WTC11 (cell line): ENCODE measurements at regions of chr17 and their contacts with region 1.

Region 1: DNA sequence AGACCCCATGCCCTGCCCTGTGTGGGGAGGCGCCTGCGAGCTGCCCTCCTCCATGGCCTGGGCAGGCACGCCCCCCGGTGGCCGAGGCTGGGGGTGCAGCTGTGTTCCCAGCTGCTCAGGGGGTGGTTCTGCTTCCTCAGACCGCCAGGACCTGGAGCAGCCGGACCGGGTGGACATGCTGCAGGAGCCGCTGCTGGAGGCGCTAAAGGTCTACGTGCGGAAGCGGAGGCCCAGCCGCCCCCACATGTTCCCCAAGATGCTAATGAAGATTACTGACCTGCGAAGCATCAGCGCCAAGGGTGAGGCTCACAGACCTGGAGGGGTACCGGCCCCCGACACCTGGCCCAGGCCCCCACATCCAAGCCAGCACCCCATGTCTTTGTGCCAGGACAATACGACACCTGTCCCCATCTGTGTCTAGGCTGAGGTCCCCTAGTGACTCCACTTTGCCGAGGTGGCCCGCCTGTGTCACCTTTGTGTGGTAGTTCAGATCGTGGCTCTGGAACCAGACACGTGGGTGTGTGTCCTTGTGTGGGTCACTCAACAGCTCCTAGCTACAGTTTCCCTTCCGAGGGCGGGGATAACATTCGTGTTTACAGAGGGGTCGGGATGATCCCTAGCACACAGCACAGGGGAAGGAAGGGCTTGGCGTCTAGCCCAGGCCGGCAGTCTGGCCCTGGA is 9.3 kb downstream of the GJD3 start:
- DNase-seq: peak; percentile 96
- ATAC-seq: peak; percentile 87
- H3K4me3 Mint-ChIP-seq: no peak overlapping the region
- H3K27ac Mint-ChIP-seq: no peak overlapping the region; the same call in 1 of the 2 replicates
- H3K4me1 Mint-ChIP-seq: peaks cover 48% of the 10 kb centered on the region
- H3K27me3 Mint-ChIP-seq: peaks cover 3% of the 10 kb centered on the region
- CTCF ChIP-seq: peak; percentile 98

Region 2: DNA sequence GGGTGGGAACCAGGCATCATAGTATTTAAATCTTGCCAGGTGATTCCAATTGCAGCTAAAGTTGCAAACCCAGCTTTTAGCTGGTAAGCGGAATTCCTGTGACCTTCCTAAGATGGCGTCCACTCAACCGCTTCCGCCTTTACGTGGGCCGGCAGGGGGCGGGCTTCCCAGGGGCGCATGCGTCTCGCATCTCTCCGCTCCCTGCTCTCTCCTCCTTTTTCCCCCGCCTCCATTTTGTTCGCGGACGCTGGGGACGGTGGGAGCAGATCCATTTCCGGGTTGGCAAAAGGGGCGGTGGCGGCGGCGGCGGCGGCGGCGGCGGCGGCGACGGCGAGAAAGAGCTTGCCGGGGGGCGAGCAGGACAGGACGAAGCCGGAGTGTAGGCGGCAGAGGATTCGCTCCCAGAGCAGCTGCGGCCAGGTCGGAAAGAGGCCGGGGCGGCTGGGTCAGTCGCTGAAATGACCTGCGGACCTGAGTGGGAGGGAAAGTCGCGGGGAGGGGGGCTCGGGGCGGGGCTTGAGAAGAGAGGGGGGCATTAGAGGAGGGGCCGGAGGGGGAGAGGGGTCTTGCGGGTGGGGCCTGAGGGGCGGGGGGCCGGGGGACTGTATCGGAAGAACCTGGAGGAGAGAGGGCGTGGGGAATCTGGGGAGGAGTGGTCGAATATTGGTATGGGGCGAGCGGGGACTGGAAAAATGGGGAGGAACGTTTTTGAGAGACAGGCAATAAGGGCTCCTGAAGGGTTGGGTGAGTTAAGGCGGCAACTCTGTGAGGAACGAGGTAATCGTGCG is 136.0 kb before region 1 on chr17 and contains the start of gene WIPF2:
- CTCF ChIA-PET with region 1: interaction called, 15 read pairs
- POLR2A ChIA-PET with region 1: no interaction called
- DNase-seq: peak; percentile 99
- ATAC-seq: peak; percentile 90
- H3K4me3 Mint-ChIP-seq: peak within 1 kb of the TSS; percentile 90
- H3K27ac Mint-ChIP-seq: peak within 1 kb of the TSS; percentile 100
- H3K4me1 Mint-ChIP-seq: peaks cover 18% of the 10 kb centered on the region
- H3K27me3 Mint-ChIP-seq: no peaks in the 10 kb centered on the region; the same call in 1 of the 2 replicates
- CTCF ChIP-seq: peak; percentile 81
- total RNA-seq, gene WIPF2: 23.0 to 24.6 TPM (median 23.8 TPM) in 3 replicates

Region 3: DNA sequence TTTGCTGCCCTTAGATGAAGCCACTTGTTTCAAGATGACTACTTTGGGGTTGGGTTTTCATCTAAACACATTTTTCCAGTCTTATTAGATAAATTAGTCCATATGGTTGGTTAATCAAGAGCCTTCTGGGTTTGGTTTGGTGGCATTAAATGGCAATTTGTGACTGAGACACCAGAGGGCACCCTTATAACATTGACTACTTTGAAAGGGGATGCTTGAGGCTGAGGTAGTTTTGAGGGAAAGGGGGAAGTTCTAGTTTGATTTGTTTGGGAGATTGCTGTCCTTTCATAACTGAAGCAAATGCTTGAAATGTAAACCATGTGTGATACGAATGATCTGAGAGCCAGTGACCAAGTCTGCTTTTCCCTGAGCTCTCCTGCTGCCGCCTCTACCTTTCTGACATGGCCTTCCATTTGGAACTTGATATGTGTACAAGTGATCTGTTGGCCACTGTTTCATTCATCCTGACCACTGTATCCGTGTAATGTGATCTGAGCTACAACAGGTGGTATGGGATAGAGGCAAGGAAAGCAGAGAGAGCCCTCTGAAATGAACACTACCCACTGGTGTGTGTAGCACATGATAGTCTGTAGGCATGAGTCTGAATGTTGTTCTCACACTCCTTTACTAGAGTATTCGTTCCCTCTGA is 52.1 kb before region 1 on chr17:
- CTCF ChIA-PET with region 1: interaction called, 259 read pairs
- POLR2A ChIA-PET with region 1: interaction called, 14 read pairs
- DNase-seq: peak; percentile 48
- ATAC-seq: no peak
- H3K4me3 Mint-ChIP-seq: no peak overlapping the region
- H3K27ac Mint-ChIP-seq: no peak overlapping the region
- H3K4me1 Mint-ChIP-seq: peaks cover 10% of the 10 kb centered on the region
- H3K27me3 Mint-ChIP-seq: no peaks in the 10 kb centered on the region
- CTCF ChIP-seq: peak; percentile 23

Region 4: DNA sequence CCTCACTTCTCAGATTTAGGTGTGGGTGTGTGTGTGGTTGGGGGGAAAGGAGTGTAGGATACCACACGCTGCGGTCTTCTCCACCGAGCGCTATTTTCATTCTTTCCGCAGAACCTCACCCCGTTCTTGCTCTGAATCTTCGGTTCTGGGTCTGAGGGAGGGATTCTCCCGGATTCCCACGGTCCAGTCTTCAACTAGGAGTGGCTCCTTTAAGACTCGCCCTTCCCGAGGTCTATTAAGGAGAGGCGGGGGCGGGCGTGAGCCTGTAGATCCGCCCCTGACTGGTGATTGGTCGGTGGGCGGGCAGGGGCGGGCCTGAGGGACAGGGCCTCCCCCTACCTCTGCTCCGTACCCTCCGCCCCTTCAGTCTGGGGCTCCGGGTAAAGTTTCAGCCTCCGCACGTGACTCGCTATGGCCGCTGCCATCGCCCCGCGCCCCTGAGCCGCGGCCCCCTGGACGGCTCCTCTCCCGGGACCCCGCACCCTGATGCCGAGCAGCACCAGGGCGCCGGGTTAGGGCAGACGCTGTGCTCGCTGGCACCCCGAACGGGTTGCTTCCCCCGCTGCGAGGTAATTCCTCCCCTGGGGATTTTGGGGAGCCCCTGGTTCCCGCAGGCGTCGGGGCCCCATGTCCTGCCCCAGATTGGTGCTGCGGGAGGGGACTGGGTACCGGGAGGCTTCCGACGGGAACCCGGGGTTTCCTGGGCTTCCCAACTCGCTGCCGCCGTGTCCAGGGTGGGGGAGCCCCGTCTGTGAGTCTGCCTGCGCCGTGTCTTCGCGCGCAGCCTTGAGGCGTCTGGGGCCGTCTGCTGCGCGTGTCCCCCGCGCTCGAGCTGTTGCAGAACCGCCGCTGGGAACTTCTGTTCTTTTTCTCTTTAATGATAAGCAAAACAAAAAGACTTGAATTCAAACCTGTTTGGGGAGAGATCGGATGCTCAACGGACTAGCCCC is 37.1 kb before region 1 on chr17:
- CTCF ChIA-PET with region 1: interaction called, 106 read pairs
- POLR2A ChIA-PET with region 1: interaction called, 3 read pairs
- DNase-seq: peak; percentile 96
- ATAC-seq: peak; percentile 93
- H3K4me3 Mint-ChIP-seq: peak overlapping the region; percentile 90
- H3K27ac Mint-ChIP-seq: peak overlapping the region; percentile 97
- H3K4me1 Mint-ChIP-seq: peaks cover 74% of the 10 kb centered on the region
- H3K27me3 Mint-ChIP-seq: peaks cover 22% of the 10 kb centered on the region
- CTCF ChIP-seq: no peak

Region 5: DNA sequence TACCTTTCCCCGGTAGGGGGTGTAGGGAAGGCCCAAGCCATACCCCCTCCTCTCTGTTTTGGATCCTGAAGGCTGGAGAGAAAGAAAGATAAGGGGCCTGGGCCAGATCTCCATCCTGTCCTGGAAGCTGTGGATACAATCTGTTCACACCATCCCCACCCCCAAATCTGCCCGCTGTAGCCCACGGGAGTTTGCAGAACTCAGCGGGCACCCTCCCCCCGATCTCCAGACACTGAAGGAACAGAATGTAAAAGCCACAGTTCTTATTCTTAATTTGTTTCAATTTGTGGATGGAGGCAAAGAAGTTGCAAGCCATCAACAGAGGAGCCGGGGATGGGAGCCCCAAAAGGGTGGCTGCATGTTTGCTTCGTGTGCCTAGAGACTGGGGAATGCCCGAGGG is 17.9 kb before region 1 on chr17:
- CTCF ChIA-PET with region 1: interaction called, 10 read pairs
- POLR2A ChIA-PET with region 1: no interaction called
- DNase-seq: no peak
- ATAC-seq: no peak
- H3K4me3 Mint-ChIP-seq: no peak overlapping the region
- H3K27ac Mint-ChIP-seq: no peak overlapping the region
- H3K4me1 Mint-ChIP-seq: peaks cover 4% of the 10 kb centered on the region
- H3K27me3 Mint-ChIP-seq: peaks cover 47% of the 10 kb centered on the region
- CTCF ChIP-seq: no peak

Region 6: DNA sequence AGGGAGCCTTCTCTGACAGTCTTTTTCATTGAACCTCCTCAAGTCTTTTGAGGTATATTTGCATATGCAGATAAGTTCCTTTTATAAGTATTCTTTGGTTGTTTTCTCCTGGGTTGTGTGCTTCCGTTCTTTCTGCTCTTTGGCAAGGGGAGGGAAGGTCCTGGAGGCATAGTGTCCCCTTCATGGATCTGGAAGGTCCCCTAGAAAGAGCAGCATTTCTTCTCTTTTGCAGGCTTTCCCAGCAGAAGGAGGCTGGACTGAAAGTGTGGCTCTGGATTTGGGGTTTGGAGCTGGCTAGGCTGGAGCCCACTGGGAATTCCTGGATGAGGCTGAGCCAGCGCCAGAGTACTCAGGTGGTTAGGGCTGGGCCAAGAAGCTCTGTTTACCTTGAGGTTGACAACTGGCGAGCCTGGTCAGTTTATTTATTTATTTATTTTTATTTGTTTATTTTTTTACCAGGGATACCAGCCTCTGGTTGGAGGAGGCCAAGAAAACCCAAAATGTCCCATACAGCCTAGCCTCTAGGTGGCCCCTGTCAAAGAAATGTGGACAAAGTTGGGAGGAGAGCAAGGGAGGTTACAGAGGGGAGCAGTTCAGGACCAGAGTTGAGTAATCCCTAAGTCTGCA is 67.8 kb after region 1 on chr17:
- CTCF ChIA-PET with region 1: interaction called, 12 read pairs
- POLR2A ChIA-PET with region 1: no interaction called
- DNase-seq: peak; percentile 67
- ATAC-seq: peak; percentile 80
- H3K4me3 Mint-ChIP-seq: peak overlapping the region; percentile 51
- H3K27ac Mint-ChIP-seq: peak overlapping the region; percentile 91
- H3K4me1 Mint-ChIP-seq: peaks cover 49% of the 10 kb centered on the region
- H3K27me3 Mint-ChIP-seq: no peaks in the 10 kb centered on the region; the same call in 1 of the 2 replicates
- CTCF ChIP-seq: no peak